Activated CD4-positive, alpha-beta T cell treated with anti-CD3 and anti-CD28 coated beads, Interleukin-2, amount 10 ng/mL, durations not matched to agents 24 days and 14 days (primary cell): ENCODE measurements at regions of chr3 and their contacts with region 1.

Region 1: GRCh38 chr3:129824926-129825541 is 68.5 kb downstream of the TMCC1 start:
- DNase-seq: peak; percentile 81
- H3K4me3 Mint-ChIP-seq: no peak overlapping the region
- H3K27ac Mint-ChIP-seq: no peak overlapping the region
- H3K4me1 Mint-ChIP-seq: peaks cover 19% of the 10 kb centered on the region
- H3K27me3 Mint-ChIP-seq: no peaks in the 10 kb centered on the region

Region 2: GRCh38 chr3:129077222-129077621 is 747.8 kb before region 1 on chr3:
- intact Hi-C with region 1: loop called (anchors 5 kb)
- DNase-seq: no peak
- H3K4me3 Mint-ChIP-seq: no peak overlapping the region
- H3K27ac Mint-ChIP-seq: no peak overlapping the region
- H3K4me1 Mint-ChIP-seq: peaks cover 2% of the 10 kb centered on the region
- H3K27me3 Mint-ChIP-seq: peaks cover 2% of the 10 kb centered on the region

Region 3: DNA sequence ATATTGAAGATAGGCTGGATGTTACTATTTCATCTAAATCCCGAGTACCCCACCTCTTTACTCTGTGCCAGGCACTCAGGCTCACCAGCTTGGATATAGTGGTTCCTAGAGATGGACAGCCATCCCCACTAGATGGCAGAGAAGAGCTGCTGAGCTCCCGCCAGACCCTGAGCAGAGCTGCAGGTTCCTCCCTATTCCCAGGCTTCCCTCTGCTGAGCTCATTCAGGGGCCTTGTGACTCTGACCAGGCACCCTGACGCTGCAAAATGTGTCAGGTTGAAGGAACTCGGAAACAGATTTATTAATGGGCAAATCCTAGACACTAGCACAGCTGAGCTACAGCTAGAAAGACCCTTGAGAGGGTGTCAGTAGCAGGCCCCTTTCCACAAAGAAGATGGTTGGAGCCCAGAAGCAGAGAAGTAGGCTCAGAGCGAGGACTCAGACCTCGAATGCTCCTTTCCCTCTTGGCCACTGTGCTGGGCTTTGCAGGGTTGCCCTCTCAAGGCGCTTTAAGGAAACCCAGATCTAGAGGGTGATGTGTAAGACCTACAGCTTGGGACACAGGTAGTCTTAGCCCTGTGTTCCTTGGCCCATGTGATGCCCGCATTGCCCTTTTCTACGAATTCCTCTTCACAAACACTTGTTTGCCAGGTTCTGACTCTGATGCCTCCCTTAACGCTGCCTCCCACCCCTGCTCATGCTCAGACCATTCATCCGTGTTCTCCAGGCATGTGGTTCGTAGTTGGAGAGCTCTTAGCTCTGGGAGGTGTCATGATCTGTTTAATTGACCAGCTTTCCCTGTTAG is 334.6 kb before region 1 on chr3:
- intact Hi-C with region 1: loop called (anchors 1 kb)
- DNase-seq: peak; percentile 85
- H3K4me3 Mint-ChIP-seq: no peak overlapping the region
- H3K27ac Mint-ChIP-seq: no peak overlapping the region
- H3K4me1 Mint-ChIP-seq: peaks cover 2% of the 10 kb centered on the region
- H3K27me3 Mint-ChIP-seq: no peaks in the 10 kb centered on the region

Region 4: GRCh38 chr3:129627429-129628168 is 197.4 kb before region 1 on chr3:
- intact Hi-C with region 1: loop called (anchors 2 kb)
- DNase-seq: peak; percentile 88
- H3K4me3 Mint-ChIP-seq: peak overlapping the region; percentile 94
- H3K27ac Mint-ChIP-seq: peak overlapping the region; percentile 91
- H3K4me1 Mint-ChIP-seq: peaks cover 20% of the 10 kb centered on the region
- H3K27me3 Mint-ChIP-seq: peaks cover 11% of the 10 kb centered on the region

Region 5: DNA sequence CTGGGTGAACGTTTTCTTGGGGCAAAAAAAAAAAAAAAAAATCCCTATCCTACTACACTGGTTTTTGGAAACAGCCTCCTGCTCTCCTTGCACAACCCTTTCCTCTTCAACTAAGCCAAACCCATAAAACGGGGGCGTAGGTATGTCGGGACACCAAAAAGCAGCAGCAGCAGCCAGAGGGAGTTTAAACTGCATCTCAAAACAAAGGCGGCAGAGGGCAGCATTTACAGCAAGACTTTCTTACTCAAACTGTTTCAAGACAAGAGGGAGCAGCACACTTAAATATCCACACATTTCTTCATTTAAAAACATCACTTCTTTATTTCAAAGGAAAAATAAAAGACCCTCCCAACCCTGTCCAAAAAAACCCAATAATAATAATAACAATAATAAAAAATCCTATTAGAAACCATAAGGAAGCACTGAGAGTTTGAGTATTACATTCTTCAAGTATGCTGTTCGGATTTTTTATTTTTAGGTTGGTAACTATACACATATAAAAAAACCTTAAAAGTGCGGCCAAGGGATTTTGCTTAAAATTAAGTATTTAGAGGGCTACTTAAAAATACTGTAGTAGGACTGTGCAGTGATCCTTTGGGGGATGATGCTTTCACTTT is 174.7 kb before region 1 on chr3:
- intact Hi-C with region 1: loop called (anchors 1 kb)
- DNase-seq: peak; percentile 86
- H3K4me3 Mint-ChIP-seq: no peak overlapping the region
- H3K27ac Mint-ChIP-seq: no peak overlapping the region
- H3K4me1 Mint-ChIP-seq: peaks cover 1% of the 10 kb centered on the region
- H3K27me3 Mint-ChIP-seq: peaks cover 7% of the 10 kb centered on the region

Region 6: GRCh38 chr3:129756871-129757270 is 68.2 kb before region 1 on chr3:
- intact Hi-C with region 1: no loop called
- DNase-seq: no peak
- H3K4me3 Mint-ChIP-seq: no peak overlapping the region
- H3K27ac Mint-ChIP-seq: no peak overlapping the region
- H3K4me1 Mint-ChIP-seq: no peaks in the 10 kb centered on the region
- H3K27me3 Mint-ChIP-seq: no peaks in the 10 kb centered on the region

Region 7: GRCh38 chr3:129878372-129878771 is 53.3 kb after region 1 on chr3:
- intact Hi-C with region 1: no loop called
- DNase-seq: no peak
- H3K4me3 Mint-ChIP-seq: no peak overlapping the region
- H3K27ac Mint-ChIP-seq: no peak overlapping the region
- H3K4me1 Mint-ChIP-seq: peaks cover 3% of the 10 kb centered on the region
- H3K27me3 Mint-ChIP-seq: no peaks in the 10 kb centered on the region

Region 8: GRCh38 chr3:129893581-129894070 is 68.6 kb after region 1 on chr3 and contains the start of gene TMCC1:
- intact Hi-C with region 1: loop called (anchors 5 kb)
- DNase-seq: peak; percentile 97
- H3K4me3 Mint-ChIP-seq: peak within 1 kb of the TSS; percentile 92
- H3K27ac Mint-ChIP-seq: peak within 1 kb of the TSS; percentile 90
- H3K4me1 Mint-ChIP-seq: peaks cover 36% of the 10 kb centered on the region
- H3K27me3 Mint-ChIP-seq: no peaks in the 10 kb centered on the region
- total RNA-seq, gene TMCC1: 19.2 and 21.0 TPM in 2 replicates

Region 9: GRCh38 chr3:129934234-129935123 is 109.4 kb after region 1 on chr3:
- intact Hi-C with region 1: loop called (anchors 1 kb)
- DNase-seq: peak; percentile 73
- H3K4me3 Mint-ChIP-seq: no peak overlapping the region
- H3K27ac Mint-ChIP-seq: no peak overlapping the region
- H3K4me1 Mint-ChIP-seq: peaks cover 6% of the 10 kb centered on the region
- H3K27me3 Mint-ChIP-seq: peaks cover 7% of the 10 kb centered on the region